ENCODE measurements at regions of chr10 and their contacts with region 1.

Region 1: GRCh38 chr10:17365402-17365801 is 89.0 kb downstream of the ST8SIA6 start:
- DNase-seq: no peak
- H3K4me3 Mint-ChIP-seq: no peak overlapping the region
- H3K27ac Mint-ChIP-seq: no peak overlapping the region
- H3K4me1 Mint-ChIP-seq: no peaks in the 10 kb centered on the region
- H3K27me3 Mint-ChIP-seq: peaks cover 4% of the 10 kb centered on the region

Region 2: GRCh38 chr10:17153296-17153695 is 212.1 kb before region 1 on chr10:
- CTCF ChIA-PET with region 1: no interaction called
- DNase-seq: no peak
- H3K4me3 Mint-ChIP-seq: no peak overlapping the region
- H3K27ac Mint-ChIP-seq: no peak overlapping the region
- H3K4me1 Mint-ChIP-seq: no peaks in the 10 kb centered on the region
- H3K27me3 Mint-ChIP-seq: no peaks in the 10 kb centered on the region

Region 3: DNA sequence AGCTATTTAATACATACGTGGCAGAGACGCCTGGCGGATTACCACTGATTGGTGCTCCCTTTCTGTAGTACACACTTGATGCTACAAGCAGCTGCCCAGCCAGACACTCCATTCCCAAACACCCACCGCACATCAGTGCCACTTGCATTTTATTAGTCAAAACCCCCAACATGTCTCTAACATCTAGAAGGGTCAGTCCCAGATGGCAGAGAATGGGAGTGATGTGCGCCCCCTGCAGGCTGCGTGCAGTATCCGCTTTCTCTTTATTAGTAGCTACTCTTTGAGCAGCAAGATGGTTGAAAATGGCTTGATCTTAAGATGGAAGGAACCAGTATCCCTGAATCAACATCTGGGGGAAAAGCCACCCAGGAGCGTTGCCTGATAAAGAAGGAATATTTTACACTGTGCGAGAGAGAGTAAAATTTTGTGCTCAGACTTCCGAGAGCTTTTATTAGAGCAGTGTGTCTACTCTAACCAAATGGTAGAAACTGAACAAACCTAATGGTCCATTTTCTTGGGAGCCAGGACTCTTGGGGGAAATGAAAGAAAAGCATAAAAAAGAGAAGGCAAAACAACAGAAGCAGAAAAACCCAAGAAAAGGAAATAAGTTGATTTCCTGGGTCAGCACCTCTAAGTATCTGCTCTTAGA is 10.7 kb after region 1 on chr10:
- CTCF ChIA-PET with region 1: interaction called, 12 read pairs
- DNase-seq: peak; percentile 53
- H3K4me3 Mint-ChIP-seq: no peak overlapping the region
- H3K27ac Mint-ChIP-seq: no peak overlapping the region
- H3K4me1 Mint-ChIP-seq: no peaks in the 10 kb centered on the region
- H3K27me3 Mint-ChIP-seq: no peaks in the 10 kb centered on the region

Region 4: GRCh38 chr10:17409170-17409733 is 43.9 kb after region 1 on chr10:
- CTCF ChIA-PET with region 1: no interaction called
- DNase-seq: peak; percentile 24
- H3K4me3 Mint-ChIP-seq: no peak overlapping the region
- H3K27ac Mint-ChIP-seq: peak overlapping the region; percentile 30
- H3K4me1 Mint-ChIP-seq: peaks cover 26% of the 10 kb centered on the region
- H3K27me3 Mint-ChIP-seq: peaks cover 10% of the 10 kb centered on the region

Region 5: DNA sequence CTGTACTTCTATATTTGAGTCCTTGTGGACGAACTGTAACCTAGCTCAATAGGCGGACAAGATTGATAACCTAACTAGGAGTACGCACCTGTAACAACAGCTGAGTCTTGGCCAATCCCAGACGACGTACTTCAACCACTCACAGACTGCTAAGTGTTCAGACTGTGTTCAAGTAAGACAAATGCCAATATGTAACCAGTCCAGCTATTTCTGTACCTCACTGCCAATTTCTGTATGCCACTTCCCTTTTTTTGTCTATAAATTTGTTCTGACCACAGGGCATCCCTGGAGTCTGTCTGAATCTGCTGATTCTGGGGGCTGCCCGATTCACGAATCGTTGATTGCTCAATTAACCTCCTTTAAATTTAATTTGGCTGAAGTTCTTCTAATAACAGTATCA is 219.6 kb after region 1 on chr10:
- CTCF ChIA-PET with region 1: no interaction called
- DNase-seq: no peak
- H3K4me3 Mint-ChIP-seq: no peak overlapping the region
- H3K27ac Mint-ChIP-seq: no peak overlapping the region
- H3K4me1 Mint-ChIP-seq: peaks cover 4% of the 10 kb centered on the region
- H3K27me3 Mint-ChIP-seq: peaks cover 5% of the 10 kb centered on the region